ENCODE measurements at regions of chr7 and their contacts with region 1.

Region 1: GRCh38 chr7:128259131-128259800 is 18.2 kb downstream of the LEP start:
- DNase-seq: no peak
- H3K4me3 ChIP-seq: no peak overlapping the region
- H3K4me3 Mint-ChIP-seq: peak overlapping the region; percentile 68
- H3K27ac Mint-ChIP-seq: peak overlapping the region; percentile 95
- H3K4me1 ChIP-seq: peaks cover 22% of the 10 kb centered on the region
- H3K4me1 Mint-ChIP-seq: peaks cover 39% of the 10 kb centered on the region
- H3K27me3 ChIP-seq: no peaks in the 10 kb centered on the region
- H3K27me3 Mint-ChIP-seq: no peaks in the 10 kb centered on the region
- CTCF ChIP-seq: no peak

Region 2: DNA sequence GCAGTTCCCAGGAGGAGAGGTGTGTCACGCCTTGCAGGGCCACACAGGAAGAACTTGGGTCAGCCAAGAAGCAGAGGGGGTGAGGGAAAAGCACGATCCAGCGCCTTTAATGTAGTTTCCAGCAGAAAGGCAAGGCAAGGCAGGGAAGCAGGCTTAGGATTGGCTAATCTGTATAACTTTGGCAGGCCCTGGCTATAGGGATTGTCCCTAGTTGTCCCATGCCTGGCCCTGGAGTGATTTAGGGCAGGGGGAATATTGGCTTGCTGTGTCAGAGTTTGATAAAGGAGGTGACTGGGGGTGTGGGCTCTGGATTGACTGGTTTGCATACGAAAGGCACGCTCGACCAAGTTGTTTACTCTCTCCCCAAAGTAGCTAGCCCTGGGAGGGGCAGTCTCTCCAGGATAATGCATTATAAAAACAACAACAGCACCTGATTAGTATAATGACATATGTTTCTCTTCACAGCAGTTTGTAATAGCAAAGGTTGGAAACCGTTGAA is 39.9 kb after region 1 on chr7:
- CTCF ChIA-PET with region 1: no interaction called
- POLR2A ChIA-PET with region 1: no interaction called
- intact Hi-C with region 1: loop called (anchors 5 kb)
- DNase-seq: no peak
- H3K4me3 ChIP-seq: no peak overlapping the region
- H3K4me3 Mint-ChIP-seq: no peak overlapping the region
- H3K27ac Mint-ChIP-seq: no peak overlapping the region
- H3K4me1 ChIP-seq: peaks cover 8% of the 10 kb centered on the region
- H3K4me1 Mint-ChIP-seq: peaks cover 6% of the 10 kb centered on the region
- H3K27me3 ChIP-seq: no peaks in the 10 kb centered on the region
- H3K27me3 Mint-ChIP-seq: no peaks in the 10 kb centered on the region
- CTCF ChIP-seq: no peak

Region 3: GRCh38 chr7:128322040-128322643 is 62.9 kb after region 1 on chr7:
- CTCF ChIA-PET with region 1: no interaction called
- POLR2A ChIA-PET with region 1: no interaction called
- intact Hi-C with region 1: loop called (anchors 5 kb)
- DNase-seq: peak in 1 of 2 experiments; percentile 33
- H3K4me3 ChIP-seq: no peak overlapping the region
- H3K4me3 Mint-ChIP-seq: no peak overlapping the region
- H3K27ac Mint-ChIP-seq: no peak overlapping the region
- H3K4me1 ChIP-seq: no peaks in the 10 kb centered on the region
- H3K4me1 Mint-ChIP-seq: no peaks in the 10 kb centered on the region
- H3K27me3 ChIP-seq: no peaks in the 10 kb centered on the region
- H3K27me3 Mint-ChIP-seq: no peaks in the 10 kb centered on the region
- CTCF ChIP-seq: peak in 1 of 2 experiments; percentile 26

Measured in Caco-2 (cell line).